ENCODE measurements at regions of chr21 and their contacts with region 1.

Region 1: GRCh38 chr21:34073032-34073869 is at the starts of genes MRPS6 and SLC5A3:
- DNase-seq: peak; percentile 75
- H3K4me3 Mint-ChIP-seq: peak within 1 kb of the TSS; percentile 91
- H3K27ac Mint-ChIP-seq: peak within 1 kb of the TSS; percentile 93
- H3K4me1 Mint-ChIP-seq: peaks cover 36% of the 10 kb centered on the region
- H3K27me3 Mint-ChIP-seq: no peaks in the 10 kb centered on the region
- CTCF ChIP-seq: no peak
- total RNA-seq, gene MRPS6: 86.0 and 90.7 TPM in 2 replicates
- total RNA-seq, gene SLC5A3: 8.1 and 8.5 TPM in 2 replicates

Region 2: DNA sequence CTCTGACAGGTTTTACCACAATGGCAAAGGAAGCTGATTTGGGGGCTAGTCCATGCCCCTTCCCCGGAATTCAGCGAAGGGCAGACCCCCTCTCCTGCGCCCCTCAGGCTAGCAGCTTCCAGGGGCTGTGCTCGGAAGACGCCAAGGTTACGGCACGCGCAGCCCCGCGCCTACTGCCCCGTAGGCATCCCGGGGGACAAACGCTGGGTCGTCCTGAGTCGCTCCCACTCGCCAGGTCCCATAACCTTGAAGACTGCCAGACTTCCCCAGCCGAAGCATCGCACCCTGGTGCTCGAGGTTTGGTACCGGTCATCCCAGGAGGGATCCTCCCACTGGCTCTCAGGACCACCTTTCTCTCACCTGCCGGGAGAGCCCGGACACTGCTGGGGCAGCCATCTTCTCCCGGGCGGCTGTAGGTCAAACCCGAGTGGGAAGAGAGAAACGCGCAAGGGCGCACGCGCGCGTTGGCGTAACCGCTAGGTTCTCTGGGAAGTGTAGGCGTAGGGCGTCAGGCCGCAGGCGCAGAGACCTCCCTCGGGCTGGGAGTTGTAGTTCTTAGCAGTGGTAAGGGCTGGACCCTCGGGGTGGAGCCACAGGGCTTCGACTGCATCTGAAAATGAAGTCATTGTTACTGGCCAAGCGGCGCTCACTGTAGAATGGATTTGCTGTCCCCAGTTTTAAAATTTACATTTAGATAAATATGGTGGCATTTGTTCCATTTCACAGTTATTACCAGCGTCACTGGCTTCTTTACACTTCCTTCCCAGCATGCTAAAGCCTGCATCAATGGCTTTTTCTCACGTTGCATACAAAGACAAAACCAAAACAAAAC is 157.7 kb before region 1 on chr21 and contains the start of gene ATP5PO:
- CTCF ChIA-PET with region 1: no interaction called
- POLR2A ChIA-PET with region 1: interaction called, 10 read pairs
- intact Hi-C with region 1: no loop called
- DNase-seq: peak; percentile 97
- H3K4me3 Mint-ChIP-seq: peak within 1 kb of the TSS; percentile 95
- H3K27ac Mint-ChIP-seq: peak within 1 kb of the TSS; percentile 98
- H3K4me1 Mint-ChIP-seq: peaks cover 22% of the 10 kb centered on the region
- H3K27me3 Mint-ChIP-seq: no peaks in the 10 kb centered on the region
- CTCF ChIP-seq: no peak
- total RNA-seq, gene ATP5PO: 147 and 196 TPM in 2 replicates

Region 3: DNA sequence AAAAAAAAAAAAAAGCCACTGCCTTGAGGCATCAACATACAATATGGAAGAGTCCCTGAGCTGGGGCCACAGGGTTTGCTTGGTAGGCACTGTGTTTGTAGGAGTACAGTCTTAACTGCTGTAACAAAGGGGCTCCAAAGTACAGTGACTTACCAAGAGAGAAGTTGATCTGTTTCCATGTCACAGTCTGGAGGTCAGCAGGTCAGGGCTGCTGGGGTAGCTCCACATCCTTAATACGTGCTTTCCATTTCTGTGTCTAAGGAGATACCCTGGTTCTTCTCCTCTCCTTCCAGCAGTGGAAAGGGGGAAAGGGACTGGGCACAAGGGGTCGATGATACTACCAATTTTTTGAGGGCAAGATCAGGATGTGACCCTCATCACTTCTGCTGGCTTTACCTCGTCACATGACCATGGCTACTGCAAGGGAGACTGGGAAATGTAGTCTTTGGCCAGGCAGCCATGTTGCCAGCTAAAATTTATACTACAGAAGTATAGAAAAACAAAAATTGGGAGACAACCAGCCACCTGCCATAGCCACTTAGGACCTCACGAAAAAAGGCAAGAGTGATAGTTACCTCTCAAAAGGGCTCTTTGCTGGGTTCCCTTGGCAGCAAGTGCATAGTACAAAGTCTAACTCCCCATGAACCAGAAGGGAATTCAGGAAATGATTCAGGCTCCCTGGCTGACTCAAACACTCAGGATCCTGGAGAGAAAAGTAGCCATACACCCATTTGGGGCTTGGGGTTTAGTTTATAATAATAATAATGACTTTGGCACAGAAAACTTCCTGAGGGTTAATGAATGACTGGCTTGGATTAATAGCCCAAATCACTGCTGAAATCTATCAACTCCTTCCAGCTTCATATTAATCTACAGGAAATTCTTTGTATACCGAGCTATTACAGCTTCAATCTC is 104.9 kb before region 1 on chr21:
- CTCF ChIA-PET with region 1: no interaction called
- POLR2A ChIA-PET with region 1: interaction called, 10 read pairs
- intact Hi-C with region 1: no loop called
- DNase-seq: peak; percentile 55
- H3K4me3 Mint-ChIP-seq: no peak overlapping the region
- H3K27ac Mint-ChIP-seq: peak overlapping the region; percentile 79
- H3K4me1 Mint-ChIP-seq: peaks cover 24% of the 10 kb centered on the region
- H3K27me3 Mint-ChIP-seq: no peaks in the 10 kb centered on the region
- CTCF ChIP-seq: no peak

Region 4: DNA sequence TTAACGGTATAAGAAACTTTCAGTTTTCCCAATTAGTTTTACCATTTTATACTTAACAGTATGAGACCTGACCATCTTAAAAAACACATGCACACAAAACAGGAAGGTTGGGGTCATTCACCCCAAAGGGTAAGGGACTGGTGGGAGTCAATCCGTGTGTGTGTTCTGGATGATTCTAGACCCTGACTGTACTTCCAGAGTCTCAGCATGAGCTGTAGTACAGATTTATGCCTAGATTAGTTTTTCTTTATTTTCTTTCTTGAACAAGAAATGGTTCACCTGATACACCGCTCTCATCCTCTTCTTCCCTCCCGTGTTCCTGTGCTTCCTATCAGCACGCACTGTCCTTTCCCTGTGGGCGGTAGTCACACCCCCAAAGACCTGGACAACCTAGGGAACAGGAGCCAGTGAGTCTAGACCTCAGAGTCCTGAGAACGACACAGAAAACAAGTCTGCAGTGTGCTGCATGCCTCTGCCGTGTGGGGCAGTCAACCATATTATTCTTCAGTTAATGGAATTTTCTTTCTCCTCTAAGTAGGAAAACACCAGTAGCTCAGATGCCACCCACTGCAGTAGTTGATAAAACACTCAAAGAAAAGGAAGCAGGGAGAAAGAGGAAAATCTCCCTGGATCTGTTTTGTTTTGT is 38.8 kb before region 1 on chr21:
- CTCF ChIA-PET with region 1: no interaction called
- POLR2A ChIA-PET with region 1: interaction called, 15 read pairs
- intact Hi-C with region 1: no loop called
- DNase-seq: no peak
- H3K4me3 Mint-ChIP-seq: no peak overlapping the region
- H3K27ac Mint-ChIP-seq: no peak overlapping the region
- H3K4me1 Mint-ChIP-seq: peaks cover 43% of the 10 kb centered on the region
- H3K27me3 Mint-ChIP-seq: no peaks in the 10 kb centered on the region
- CTCF ChIP-seq: no peak

Region 5: DNA sequence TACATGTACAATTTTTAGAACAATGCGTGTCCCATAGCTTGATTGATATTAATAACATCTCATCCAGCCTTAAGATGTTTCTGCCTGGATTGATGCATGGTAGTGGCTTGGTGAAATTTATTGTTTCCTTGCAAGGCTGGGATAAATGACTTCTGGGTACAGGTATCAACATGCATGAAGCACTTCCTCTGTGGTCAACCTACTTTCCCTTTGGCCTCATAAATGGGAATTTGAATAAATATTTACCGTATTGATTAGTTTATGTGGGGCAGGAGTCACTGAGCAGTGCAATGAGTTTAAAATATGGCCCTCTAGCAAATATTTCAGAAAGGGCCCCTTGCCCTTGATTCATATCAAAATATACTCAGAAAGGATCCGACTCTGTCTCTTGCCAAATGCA is 206.6 kb after region 1 on chr21:
- CTCF ChIA-PET with region 1: no interaction called
- POLR2A ChIA-PET with region 1: no interaction called
- intact Hi-C with region 1: no loop called
- DNase-seq: no peak
- H3K4me3 Mint-ChIP-seq: no peak overlapping the region
- H3K27ac Mint-ChIP-seq: no peak overlapping the region
- H3K4me1 Mint-ChIP-seq: peaks cover 11% of the 10 kb centered on the region
- H3K27me3 Mint-ChIP-seq: no peaks in the 10 kb centered on the region
- CTCF ChIP-seq: no peak

Region 6: DNA sequence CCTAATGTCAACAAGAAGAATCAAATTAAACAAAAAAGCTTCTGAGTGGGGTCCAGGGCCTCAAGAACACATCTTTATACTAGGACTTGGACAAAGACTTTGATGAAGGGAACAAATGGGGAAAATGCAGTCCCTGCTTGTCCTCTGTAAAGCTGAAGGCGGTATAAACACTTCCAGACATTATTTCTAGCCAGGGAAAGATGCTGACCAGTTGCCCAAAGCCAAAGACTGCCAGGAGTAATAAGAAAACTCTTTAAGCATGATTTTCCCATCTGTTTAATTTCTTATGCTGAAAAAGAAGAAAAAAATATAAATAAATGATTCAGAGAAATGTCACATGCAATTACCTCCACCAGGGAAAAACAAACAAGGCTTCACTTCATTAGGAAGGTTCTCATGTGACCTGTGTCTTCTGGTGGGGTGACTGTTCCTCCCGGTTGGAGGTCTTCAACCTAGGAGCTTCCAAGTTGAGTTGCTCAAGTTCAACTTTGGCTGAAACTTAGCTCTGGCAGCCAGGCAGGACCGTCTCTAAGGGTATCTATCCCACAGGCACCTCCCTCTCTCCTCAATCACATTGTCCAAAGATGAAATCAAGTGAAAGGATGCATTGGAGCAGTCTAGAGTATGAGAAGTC is 225.4 kb after region 1 on chr21:
- CTCF ChIA-PET with region 1: no interaction called
- POLR2A ChIA-PET with region 1: no interaction called
- intact Hi-C with region 1: no loop called
- DNase-seq: no peak
- H3K4me3 Mint-ChIP-seq: no peak overlapping the region
- H3K27ac Mint-ChIP-seq: no peak overlapping the region
- H3K4me1 Mint-ChIP-seq: no peaks in the 10 kb centered on the region
- H3K27me3 Mint-ChIP-seq: peaks cover 27% of the 10 kb centered on the region
- CTCF ChIP-seq: no peak

Region 7: DNA sequence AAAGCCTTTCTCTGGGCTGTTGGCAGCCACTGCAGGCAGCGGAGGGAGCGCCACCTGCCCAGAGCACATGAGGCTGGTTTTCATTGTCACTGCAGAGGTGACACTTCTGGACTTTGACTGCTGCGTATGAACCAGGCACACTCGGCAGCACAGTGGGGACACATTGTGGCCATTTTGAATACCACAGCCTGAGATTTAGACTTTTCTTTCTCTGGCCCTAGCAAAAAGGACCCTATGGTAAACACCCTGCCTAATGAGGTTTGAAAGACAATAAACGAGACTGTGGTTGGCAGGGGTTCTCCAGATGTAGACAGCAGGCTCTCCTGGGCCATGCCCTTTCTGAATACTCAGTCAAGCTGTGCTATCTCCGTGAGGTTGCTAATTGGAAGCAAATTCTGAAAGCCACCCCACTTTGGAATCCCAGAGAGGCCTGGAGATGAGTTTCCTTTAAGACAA is 278.6 kb after region 1 on chr21:
- CTCF ChIA-PET with region 1: interaction called, 6 read pairs
- POLR2A ChIA-PET with region 1: interaction called, 10 read pairs
- intact Hi-C with region 1: loop called (anchors 5 kb)
- DNase-seq: peak; percentile 26
- H3K4me3 Mint-ChIP-seq: no peak overlapping the region
- H3K27ac Mint-ChIP-seq: no peak overlapping the region
- H3K4me1 Mint-ChIP-seq: no peaks in the 10 kb centered on the region
- H3K27me3 Mint-ChIP-seq: peaks cover 34% of the 10 kb centered on the region
- CTCF ChIP-seq: peak; percentile 32